Aorta (tissue), 5 donors: ENCODE measurements at regions of chr2 and their contacts with region 1.

Region 1: GRCh38 chr2:152126664-152127063 is 27.8 kb upstream of the CACNB4 start:
- DNase-seq: no peak
- ATAC-seq: no peak
- H3K4me3 ChIP-seq: no peak overlapping the region
- H3K27ac ChIP-seq: no peak overlapping the region
- H3K4me1 ChIP-seq: no peaks in the 10 kb centered on the region
- H3K27me3 ChIP-seq: no peaks in the 10 kb centered on the region

Region 2: GRCh38 chr2:152047819-152048471 is 78.7 kb before region 1 on chr2:
- intact Hi-C with region 1: loop called in 1 of 2 experiments (anchors 10 kb)
- DNase-seq: no peak
- ATAC-seq: no peak
- H3K4me3 ChIP-seq: no peak overlapping the region
- H3K27ac ChIP-seq: no peak overlapping the region
- H3K4me1 ChIP-seq: no peaks in the 10 kb centered on the region
- H3K27me3 ChIP-seq: no peaks in the 10 kb centered on the region

Region 3: DNA sequence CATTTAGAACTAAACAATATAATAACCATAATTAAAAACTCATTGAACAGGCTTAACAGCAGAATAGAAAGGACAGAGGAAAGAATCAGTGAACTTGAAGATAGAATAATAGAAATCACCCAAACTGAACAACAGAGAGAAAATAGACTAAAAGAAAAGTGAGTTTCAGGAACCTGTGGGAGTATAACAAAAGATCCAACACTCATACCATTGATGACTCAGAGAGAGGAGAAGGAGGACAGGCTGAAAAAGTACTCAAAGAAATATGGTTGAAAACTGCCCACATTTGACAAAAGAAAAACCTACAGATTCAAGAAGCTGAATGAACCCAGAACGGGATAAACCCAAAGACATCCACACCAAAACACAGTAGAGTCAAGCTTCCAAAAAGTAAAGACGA is 154.1 kb after region 1 on chr2:
- intact Hi-C with region 1: no loop called
- DNase-seq: no peak
- ATAC-seq: no peak
- H3K4me3 ChIP-seq: no peak overlapping the region
- H3K27ac ChIP-seq: no peak overlapping the region
- H3K4me1 ChIP-seq: no peaks in the 10 kb centered on the region
- H3K27me3 ChIP-seq: no peaks in the 10 kb centered on the region

Region 4: DNA sequence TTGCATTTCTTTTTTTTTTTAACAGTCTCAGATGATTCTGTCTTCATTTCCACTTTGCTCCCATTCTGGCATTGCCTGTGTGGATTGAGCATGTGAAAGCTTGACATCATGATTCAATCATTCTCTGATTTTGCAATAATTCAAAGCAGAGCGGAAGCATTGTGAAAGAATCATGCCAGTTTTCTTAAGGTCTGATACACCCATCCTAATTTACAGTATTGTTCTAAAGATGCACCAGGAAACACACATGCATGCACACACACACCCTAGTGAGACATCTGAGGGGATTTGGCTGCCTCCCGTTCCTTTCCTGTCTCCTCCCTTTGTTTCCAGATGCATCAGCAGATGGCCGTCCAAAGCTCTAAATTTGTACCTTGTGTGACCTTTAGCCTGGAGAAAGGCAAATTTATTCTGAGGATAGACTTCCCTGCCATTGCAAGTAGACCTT is 305.6 kb after region 1 on chr2:
- intact Hi-C with region 1: no loop called
- DNase-seq: no peak
- ATAC-seq: peak; percentile 56
- H3K4me3 ChIP-seq: no peak overlapping the region
- H3K27ac ChIP-seq: no peak overlapping the region
- H3K4me1 ChIP-seq: peaks cover 4 to 6% of the 10 kb centered on the region in 2 donors
- H3K27me3 ChIP-seq: no peaks in the 10 kb centered on the region